Right ventricle myocardium inferior (tissue), 1 donor: ENCODE measurements at regions of chr12 and their contacts with region 1.

Region 1: GRCh38 chr12:2034633-2035430 is 18.0 kb upstream of the CACNA1C start:
- DNase-seq: peak; percentile 94
- ATAC-seq: peak; percentile 81

Region 2: DNA sequence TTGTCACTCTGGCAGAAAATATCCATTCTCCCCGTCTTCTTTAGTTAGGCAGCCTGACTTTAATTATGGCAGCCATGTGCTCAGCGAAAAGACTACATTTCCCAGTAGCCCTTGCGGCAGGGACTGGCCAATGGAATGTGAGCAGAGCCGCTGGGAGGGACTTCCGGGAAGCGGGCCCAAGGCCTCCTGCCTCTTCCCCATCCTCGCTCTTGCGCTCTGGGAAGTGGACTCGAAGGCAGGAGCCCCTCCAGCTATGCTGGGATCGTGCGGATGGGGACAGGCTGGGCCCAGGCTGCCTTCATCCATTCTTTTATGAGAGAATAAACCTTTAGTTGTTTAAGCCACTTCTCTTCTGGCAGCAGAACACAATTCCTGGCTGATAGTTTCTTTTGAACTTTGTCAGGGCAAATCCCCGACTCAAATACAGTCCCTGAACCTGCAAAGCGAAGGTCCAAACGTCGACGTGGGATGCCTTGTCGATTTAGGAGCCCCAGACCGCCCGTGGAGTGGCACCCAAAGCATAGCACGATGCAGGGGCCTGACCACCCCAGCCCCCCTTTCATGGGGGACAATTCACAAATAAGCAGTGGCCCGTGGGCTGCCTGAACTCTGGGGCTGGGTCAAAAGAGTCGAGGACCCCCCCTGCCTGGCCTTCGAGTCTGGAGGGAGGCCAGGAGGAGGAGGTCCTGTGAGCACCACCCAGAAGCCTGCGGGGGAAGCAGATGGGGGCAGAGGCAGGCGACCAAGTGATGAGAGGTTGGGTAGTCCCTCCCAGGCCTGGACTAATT is 230.1 kb before region 1 on chr12:
- intact Hi-C with region 1: loop called (anchors 5 kb)
- DNase-seq: peak; percentile 94
- ATAC-seq: peak; percentile 82

Region 3: DNA sequence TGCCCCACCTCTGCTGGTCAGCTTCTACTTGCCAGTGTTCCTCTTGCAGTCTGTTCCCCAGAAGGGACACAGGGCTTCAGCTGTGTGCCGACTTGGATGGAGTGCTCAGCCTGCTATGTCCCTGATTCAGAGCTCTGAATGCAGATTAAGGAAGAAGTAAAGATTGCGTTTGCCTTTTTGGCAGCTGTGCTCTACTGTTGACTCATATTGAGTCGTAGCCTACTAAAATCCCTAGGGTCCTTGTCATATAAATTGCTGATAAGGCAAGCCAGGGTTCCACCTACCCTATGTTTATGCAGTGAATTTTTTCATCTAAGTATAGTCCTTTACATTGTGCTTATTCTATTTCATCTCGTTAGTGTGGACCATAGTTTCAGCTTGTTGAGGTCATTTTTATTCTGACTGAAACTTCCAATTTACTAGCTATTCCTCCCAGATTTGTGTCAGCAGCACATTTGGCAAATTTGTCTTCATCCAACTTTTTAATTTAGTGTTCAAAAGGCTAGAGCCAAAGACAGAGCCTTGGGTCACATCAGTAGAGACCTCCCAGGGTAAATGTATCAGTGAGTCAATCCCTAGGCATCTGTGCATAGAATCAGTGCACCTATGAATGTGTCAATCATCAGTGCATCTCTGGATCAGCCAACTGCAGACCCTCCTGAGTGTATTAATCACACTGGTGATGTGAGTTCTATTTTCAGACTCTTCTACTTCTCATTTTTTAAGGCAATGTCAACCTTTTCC is 49.9 kb after region 1 on chr12:
- intact Hi-C with region 1: no loop called
- DNase-seq: peak; percentile 73
- ATAC-seq: peak; percentile 90